ENCODE measurements at regions of chr2 and their contacts with region 1.

Region 1: GRCh38 chr2:40284797-40285196 is 167.1 kb downstream of the SLC8A1 start:
- DNase-seq: no peak
- H3K4me3 ChIP-seq: no peak overlapping the region
- H3K27ac ChIP-seq: no peak overlapping the region
- H3K4me1 ChIP-seq: no peaks in the 10 kb centered on the region
- H3K27me3 ChIP-seq: no peaks in the 10 kb centered on the region
- CTCF ChIP-seq: peak in 1 of 4 experiments; percentile 18
- POLR2A ChIP-seq: no peak

Region 2: GRCh38 chr2:40118622-40119021 is 166.2 kb before region 1 on chr2:
- intact Hi-C with region 1: no loop called
- DNase-seq: no peak
- H3K4me3 ChIP-seq: no peak overlapping the region
- H3K27ac ChIP-seq: no peak overlapping the region
- H3K4me1 ChIP-seq: no peaks in the 10 kb centered on the region
- H3K27me3 ChIP-seq: no peaks in the 10 kb centered on the region
- CTCF ChIP-seq: no peak
- POLR2A ChIP-seq: no peak

Region 3: GRCh38 chr2:40363631-40364030 is 78.8 kb after region 1 on chr2:
- intact Hi-C with region 1: loop called (anchors 5 kb)
- DNase-seq: no peak
- H3K4me3 ChIP-seq: no peak overlapping the region
- H3K27ac ChIP-seq: no peak overlapping the region
- H3K4me1 ChIP-seq: no peaks in the 10 kb centered on the region
- H3K27me3 ChIP-seq: no peaks in the 10 kb centered on the region
- CTCF ChIP-seq: no peak
- POLR2A ChIP-seq: no peak

Region 4: GRCh38 chr2:40451918-40452605 is 167.3 kb after region 1 on chr2 and contains the start of gene SLC8A1:
- intact Hi-C with region 1: loop called (anchors 5 kb)
- DNase-seq: no peak
- H3K4me3 ChIP-seq: peak within 1 kb of the TSS; percentile 31 to 39
- H3K27ac ChIP-seq: peak within 1 kb of the TSS; percentile 57 to 72
- H3K4me1 ChIP-seq: no peaks in the 10 kb centered on the region
- H3K27me3 ChIP-seq: no peaks in the 10 kb centered on the region
- CTCF ChIP-seq: no peak
- POLR2A ChIP-seq: no peak
- total RNA-seq, gene SLC8A1: 23.2 to 28.2 TPM

Region 5: GRCh38 chr2:40511661-40512213 is 226.9 kb after region 1 on chr2:
- intact Hi-C with region 1: loop called (anchors 5 kb)
- DNase-seq: peak; percentile 4
- H3K4me3 ChIP-seq: peak overlapping the region; percentile 15 to 20
- H3K27ac ChIP-seq: peak overlapping the region; percentile 13 to 46
- H3K4me1 ChIP-seq: no peaks in the 10 kb centered on the region
- H3K27me3 ChIP-seq: no peaks in the 10 kb centered on the region
- CTCF ChIP-seq: no peak
- POLR2A ChIP-seq: no peak